Activated CD4-positive, alpha-beta T cell treated with anti-CD3 and anti-CD28 coated beads for 36 hours (primary cell): ENCODE measurements at regions of chr6 and their contacts with region 1.

Region 1: DNA sequence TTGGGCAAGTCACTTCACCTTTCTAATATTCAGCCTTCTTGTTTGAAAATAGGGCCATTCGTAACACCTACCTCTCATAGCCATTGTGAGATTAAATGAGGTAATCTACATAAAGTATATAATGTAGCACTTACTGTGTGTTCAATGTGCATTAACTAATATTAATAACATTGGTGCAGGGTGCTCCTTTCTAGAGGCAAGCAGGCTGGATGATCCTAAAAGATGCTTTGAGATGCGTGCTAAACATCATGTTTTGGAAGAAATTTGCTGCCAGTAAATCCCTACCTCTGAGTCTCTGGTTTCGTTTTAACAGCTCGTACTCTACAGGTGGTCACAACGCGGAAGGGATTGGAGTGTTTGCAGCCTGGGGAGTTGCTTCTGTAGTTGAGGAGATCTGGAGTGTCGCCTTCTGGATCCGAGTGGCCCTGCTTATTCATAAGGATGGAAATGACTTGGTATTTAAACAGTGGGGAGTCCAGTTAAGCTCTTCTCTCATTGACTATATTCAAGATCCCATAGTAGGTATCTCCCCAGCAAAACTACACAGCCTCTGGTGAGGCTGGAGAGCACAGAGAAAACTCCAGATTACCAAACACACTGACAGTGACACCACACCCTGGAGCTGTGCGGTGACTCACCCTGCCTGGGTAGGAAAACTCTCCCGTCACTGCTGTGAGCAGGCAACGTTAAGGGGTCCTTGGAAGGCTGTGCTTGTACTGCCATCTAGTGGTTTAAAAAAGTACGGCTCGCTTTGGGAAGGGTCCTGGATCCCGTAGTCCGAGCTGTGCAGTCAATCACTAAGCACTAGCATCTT is 107.9 kb downstream of the MAP3K7 start:
- DNase-seq: peak; percentile 93
- ATAC-seq: peak; percentile 93
- H3K4me3 Mint-ChIP-seq: no peak overlapping the region
- H3K27ac Mint-ChIP-seq: peak overlapping the region; percentile 85
- H3K4me1 Mint-ChIP-seq: peaks cover 61% of the 10 kb centered on the region
- H3K27me3 Mint-ChIP-seq: no peaks in the 10 kb centered on the region

Region 2: GRCh38 chr6:89432875-89433251 is 1046.1 kb before region 1 on chr6 and contains the start of gene ANKRD6:
- CTCF ChIA-PET with region 1: no interaction called
- POLR2A ChIA-PET with region 1: no interaction called
- intact Hi-C with region 1: loop called in 1 of 2 experiments (anchors 1 kb)
- DNase-seq: peak; percentile 90
- ATAC-seq: peak; percentile 96
- H3K4me3 Mint-ChIP-seq: peak within 1 kb of the TSS; percentile 67
- H3K27ac Mint-ChIP-seq: no peak within 1 kb of the TSS
- H3K4me1 Mint-ChIP-seq: peaks cover 19% of the 10 kb centered on the region
- H3K27me3 Mint-ChIP-seq: peaks cover 2% of the 10 kb centered on the region
- total RNA-seq, gene ANKRD6: 2.8 to 2.9 TPM

Region 3: GRCh38 chr6:89940225-89941027 is 538.6 kb before region 1 on chr6:
- CTCF ChIA-PET with region 1: interaction called, 10 read pairs
- POLR2A ChIA-PET with region 1: no interaction called
- intact Hi-C with region 1: loop called (anchors 1 kb)
- DNase-seq: peak; percentile 80
- ATAC-seq: peak; percentile 80
- H3K4me3 Mint-ChIP-seq: no peak overlapping the region
- H3K27ac Mint-ChIP-seq: peak overlapping the region; percentile 47
- H3K4me1 Mint-ChIP-seq: peaks cover 60% of the 10 kb centered on the region
- H3K27me3 Mint-ChIP-seq: no peaks in the 10 kb centered on the region

Region 4: GRCh38 chr6:90274451-90275030 is 204.5 kb before region 1 on chr6:
- CTCF ChIA-PET with region 1: interaction called, 11 read pairs
- POLR2A ChIA-PET with region 1: interaction called, 5 read pairs
- intact Hi-C with region 1: no loop called
- DNase-seq: peak; percentile 96
- ATAC-seq: peak; percentile 89
- H3K4me3 Mint-ChIP-seq: peak overlapping the region; percentile 54
- H3K27ac Mint-ChIP-seq: peak overlapping the region; percentile 90
- H3K4me1 Mint-ChIP-seq: peaks cover 95% of the 10 kb centered on the region
- H3K27me3 Mint-ChIP-seq: no peaks in the 10 kb centered on the region

Region 5: GRCh38 chr6:90413867-90414266 is 65.1 kb before region 1 on chr6:
- CTCF ChIA-PET with region 1: interaction called, 11 read pairs
- POLR2A ChIA-PET with region 1: interaction called, 7 read pairs
- intact Hi-C with region 1: no loop called
- DNase-seq: peak; percentile 91
- ATAC-seq: peak; percentile 51
- H3K4me3 Mint-ChIP-seq: peak overlapping the region; percentile 67
- H3K27ac Mint-ChIP-seq: peak overlapping the region; percentile 93
- H3K4me1 Mint-ChIP-seq: peaks cover 72% of the 10 kb centered on the region
- H3K27me3 Mint-ChIP-seq: no peaks in the 10 kb centered on the region

Region 6: GRCh38 chr6:90466154-90466940 is 12.6 kb before region 1 on chr6:
- CTCF ChIA-PET with region 1: interaction called, 112 read pairs
- POLR2A ChIA-PET with region 1: interaction called, 11 read pairs
- intact Hi-C with region 1: no loop called
- DNase-seq: peak; percentile 68
- ATAC-seq: peak; percentile 74
- H3K4me3 Mint-ChIP-seq: peak overlapping the region; percentile 48
- H3K27ac Mint-ChIP-seq: peak overlapping the region; percentile 93
- H3K4me1 Mint-ChIP-seq: peaks cover 97% of the 10 kb centered on the region
- H3K27me3 Mint-ChIP-seq: peaks cover 2% of the 10 kb centered on the region